ENCODE measurements at regions of chr12 and their contacts with region 1.

Region 1: DNA sequence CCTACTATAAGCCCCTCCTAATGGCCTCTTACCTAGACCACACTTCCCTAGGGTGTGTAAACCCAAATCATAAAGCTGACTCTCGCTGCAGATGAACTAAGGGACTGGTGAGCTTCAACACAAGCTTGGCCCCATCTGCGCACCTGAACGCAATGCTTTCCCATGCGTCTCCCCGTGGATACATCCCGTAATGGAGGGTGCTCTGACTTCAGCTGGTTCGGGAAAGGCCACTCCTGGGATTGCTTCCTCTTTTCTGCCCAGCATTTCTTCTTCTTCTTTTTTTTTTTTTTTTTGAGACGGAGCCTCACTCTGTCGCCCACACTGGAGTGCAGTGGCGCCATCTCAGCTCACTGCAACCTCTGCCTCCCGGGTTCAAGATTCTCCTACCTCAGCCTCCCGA is 27.7 kb upstream of the ETFBKMT start:
- DNase-seq: no peak

Region 2: GRCh38 chr12:31250179-31250578 is 381.6 kb before region 1 on chr12:
- intact Hi-C with region 1: loop called (anchors 5 kb)
- DNase-seq: peak in 2 of 10 donors; percentile 16 to 26

Region 3: DNA sequence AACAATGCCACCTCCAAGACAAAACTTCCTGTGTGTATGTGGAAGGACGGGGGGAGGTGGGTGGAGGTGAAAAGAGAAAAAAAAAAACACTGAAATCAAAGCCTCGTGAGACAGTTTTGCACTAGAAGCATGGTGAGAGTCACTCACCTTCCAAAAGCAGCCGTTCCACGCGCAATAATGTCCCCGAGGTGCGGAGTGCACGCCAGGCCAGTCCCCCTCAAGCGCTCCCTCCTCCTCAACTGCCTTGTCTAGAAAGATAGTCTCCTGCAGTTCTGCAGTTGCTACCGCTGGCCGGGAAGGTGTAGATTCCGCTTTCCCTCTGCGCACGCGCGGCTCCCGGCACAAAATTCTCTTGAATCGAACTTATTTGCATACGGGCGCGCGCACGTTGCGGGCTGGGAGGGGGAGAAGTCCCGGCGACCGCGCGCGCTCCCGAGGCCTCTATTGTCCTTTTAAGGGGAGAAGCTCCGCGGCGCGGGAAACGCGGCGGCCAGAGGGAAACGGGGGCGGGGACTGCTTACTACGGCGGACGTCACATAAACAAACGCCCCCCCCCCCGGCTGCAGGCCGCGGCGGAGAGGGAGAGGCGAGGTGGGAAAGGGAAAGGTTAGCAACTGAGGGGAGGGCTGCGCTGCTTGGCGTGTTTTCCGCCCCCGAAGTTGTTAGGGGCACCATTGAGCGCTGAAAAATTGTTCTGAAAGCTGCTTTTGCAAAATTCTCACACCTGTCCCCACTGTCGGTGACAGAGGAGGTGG is 305.7 kb before region 1 on chr12 and contains the start of gene SINHCAF:
- intact Hi-C with region 1: loop called (anchors 5 kb)
- DNase-seq: peak; percentile 91 to 99 (median 97)

Region 4: DNA sequence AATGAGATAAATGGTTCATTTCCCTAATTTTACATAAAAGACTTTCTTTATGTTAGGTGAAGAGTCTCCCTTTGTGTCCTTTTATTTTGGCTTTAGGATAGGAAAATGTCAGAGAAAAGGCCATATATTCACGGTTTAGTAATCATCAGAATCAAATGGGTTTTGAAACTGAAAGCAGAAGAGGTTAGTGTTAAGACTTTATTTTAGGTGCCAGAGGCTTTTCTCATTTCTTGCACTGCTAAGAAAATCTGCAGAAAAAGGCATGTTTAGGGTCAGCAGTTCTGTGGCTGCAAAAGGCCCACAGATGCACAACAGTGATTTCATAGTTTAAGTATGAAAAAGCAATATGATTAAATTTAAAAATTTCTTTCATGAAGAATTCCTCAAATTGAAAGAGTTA is 225.4 kb before region 1 on chr12:
- intact Hi-C with region 1: loop called (anchors 1 kb)
- DNase-seq: no peak

Region 5: DNA sequence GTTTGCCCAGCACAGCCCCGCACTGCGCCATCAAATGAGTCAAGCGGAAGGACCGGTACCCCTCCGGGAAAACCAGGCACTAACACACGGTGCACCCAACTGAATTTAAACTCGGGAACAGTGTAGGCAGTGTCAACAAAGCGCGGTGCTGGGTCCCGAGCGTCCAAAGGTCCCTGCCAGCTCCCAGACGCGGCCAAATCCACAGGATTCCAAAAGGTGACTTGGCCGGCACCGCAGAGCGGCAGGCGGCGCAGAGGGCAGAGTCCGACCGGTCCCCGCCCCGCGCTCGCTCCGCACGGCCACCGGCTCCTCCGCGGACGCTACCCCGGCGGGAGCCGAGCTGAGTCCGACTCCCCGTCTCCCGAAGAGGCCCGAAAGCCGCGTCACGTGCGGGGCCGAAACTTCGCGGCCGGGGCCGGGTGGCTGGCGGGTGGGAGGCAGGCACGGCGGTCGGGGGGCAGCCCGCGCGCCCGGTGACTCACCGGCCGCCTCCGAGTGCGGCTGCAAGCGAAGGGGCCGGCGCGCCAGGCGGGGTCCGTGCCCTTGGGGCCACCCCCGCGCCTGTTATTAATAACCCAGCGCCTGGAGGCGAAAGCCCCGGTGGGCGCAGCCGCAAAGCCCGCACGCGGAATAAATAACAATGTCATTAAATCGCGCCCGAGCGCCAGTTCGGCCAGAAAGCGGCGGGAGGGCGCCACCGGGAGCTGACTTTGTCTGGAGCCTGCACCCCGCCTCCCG is 41.7 kb before region 1 on chr12:
- intact Hi-C with region 1: loop called (anchors 1 kb)
- DNase-seq: peak; percentile 47 to 94 (median 66)

Measured in posterior cingulate gyrus (tissue), 11 donors.